ENCODE measurements at regions of chr20 and their contacts with region 1.

Region 1: DNA sequence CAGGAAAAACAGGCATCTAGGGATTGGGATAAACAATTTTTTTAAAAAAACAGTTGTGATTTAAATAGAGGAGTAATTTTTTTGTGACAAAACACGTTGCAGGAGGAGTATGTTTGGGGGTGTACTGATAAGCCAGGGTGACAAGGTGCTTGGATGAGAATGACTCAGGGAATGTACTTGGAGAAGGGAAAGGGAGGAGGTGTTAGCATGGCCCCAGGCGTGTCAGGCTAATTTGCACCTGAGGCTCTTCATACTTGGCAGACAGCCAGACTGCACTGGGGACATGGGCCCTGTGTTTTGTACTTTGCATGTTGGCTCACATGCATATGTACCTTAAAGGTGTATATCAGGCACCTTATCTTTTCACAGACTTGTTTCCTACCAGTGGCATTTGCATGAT is 22.8 kb downstream of the PANK2 start:
- DNase-seq: no peak
- H3K4me3 ChIP-seq: no peak overlapping the region
- H3K4me3 Mint-ChIP-seq: no peak overlapping the region
- H3K27ac ChIP-seq: no peak overlapping the region
- H3K27ac Mint-ChIP-seq: peak overlapping the region in 3 of 7 donors; percentile 9 to 88 (median 47)
- H3K4me1 ChIP-seq: peaks cover 35% of the 10 kb centered on the region
- H3K4me1 Mint-ChIP-seq: peaks cover 27 to 58% (median 50%) of the 10 kb centered on the region in 4 donors
- H3K27me3 ChIP-seq: no peaks in the 10 kb centered on the region
- H3K27me3 Mint-ChIP-seq: no peaks in the 10 kb centered on the region

Region 2: GRCh38 chr20:3896302-3896701 is 15.7 kb before region 1 on chr20:
- CTCF ChIA-PET with region 1: no interaction called
- POLR2A ChIA-PET with region 1: interaction called, 16 read pairs
- intact Hi-C with region 1: no loop called
- DNase-seq: no peak
- H3K4me3 ChIP-seq: no peak overlapping the region
- H3K4me3 Mint-ChIP-seq: peak overlapping the region in 6 of 8 donors; percentile 22 to 86 (median 54)
- H3K27ac ChIP-seq: no peak overlapping the region
- H3K27ac Mint-ChIP-seq: peak overlapping the region in 6 of 7 donors; percentile 21 to 86 (median 70)
- H3K4me1 ChIP-seq: peaks cover 95% of the 10 kb centered on the region
- H3K4me1 Mint-ChIP-seq: peaks cover 53 to 93% (median 73%) of the 10 kb centered on the region in 4 donors
- H3K27me3 ChIP-seq: no peaks in the 10 kb centered on the region
- H3K27me3 Mint-ChIP-seq: no peaks in the 10 kb centered on the region

Region 3: DNA sequence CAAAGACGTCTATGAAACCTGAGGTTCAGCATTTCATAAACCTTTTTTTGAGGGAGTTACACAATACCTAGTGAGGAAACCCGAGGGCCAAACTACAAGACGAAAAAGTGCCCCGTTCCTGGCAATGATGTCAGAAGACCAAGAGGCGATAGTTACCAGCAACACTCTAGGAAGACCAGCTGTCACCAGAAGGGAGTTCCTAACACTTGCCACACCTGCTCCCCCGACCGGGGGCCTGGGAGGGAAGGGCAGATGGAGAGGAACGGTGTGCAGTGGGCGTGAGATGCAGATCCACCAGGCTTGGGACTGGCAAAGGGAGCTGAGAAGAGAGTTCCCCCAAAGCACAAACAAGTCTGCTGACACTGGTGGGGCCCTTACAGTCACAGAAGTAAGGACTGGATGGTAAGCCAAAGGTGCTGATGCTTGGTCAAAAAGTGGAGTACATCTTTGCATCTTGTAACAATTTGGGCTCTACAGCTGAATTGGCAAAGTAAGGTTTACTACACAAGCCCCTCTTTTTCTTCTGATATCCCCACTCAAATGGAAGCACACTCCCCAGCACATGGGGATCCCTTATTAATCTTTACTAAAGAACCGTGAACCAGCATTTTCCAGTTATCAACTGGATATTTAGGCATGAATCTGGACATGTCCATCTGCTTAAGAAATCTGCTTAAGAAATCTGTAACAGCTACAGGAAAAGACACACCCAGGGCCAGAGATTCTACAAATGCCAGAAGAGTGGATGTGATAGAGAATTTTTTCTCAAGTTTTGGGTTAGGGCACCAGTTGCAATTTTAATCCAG is 15.7 kb after region 1 on chr20:
- CTCF ChIA-PET with region 1: no interaction called
- POLR2A ChIA-PET with region 1: no interaction called
- intact Hi-C with region 1: no loop called
- DNase-seq: no peak
- H3K4me3 ChIP-seq: no peak overlapping the region
- H3K4me3 Mint-ChIP-seq: peak overlapping the region in 1 of 8 donors; percentile 3
- H3K27ac ChIP-seq: no peak overlapping the region
- H3K27ac Mint-ChIP-seq: peak overlapping the region; percentile 10 to 79 (median 51)
- H3K4me1 ChIP-seq: peaks cover 31% of the 10 kb centered on the region
- H3K4me1 Mint-ChIP-seq: peaks cover 23 to 68% (median 47%) of the 10 kb centered on the region in 4 donors
- H3K27me3 ChIP-seq: no peaks in the 10 kb centered on the region
- H3K27me3 Mint-ChIP-seq: no peaks in the 10 kb centered on the region

Region 4: DNA sequence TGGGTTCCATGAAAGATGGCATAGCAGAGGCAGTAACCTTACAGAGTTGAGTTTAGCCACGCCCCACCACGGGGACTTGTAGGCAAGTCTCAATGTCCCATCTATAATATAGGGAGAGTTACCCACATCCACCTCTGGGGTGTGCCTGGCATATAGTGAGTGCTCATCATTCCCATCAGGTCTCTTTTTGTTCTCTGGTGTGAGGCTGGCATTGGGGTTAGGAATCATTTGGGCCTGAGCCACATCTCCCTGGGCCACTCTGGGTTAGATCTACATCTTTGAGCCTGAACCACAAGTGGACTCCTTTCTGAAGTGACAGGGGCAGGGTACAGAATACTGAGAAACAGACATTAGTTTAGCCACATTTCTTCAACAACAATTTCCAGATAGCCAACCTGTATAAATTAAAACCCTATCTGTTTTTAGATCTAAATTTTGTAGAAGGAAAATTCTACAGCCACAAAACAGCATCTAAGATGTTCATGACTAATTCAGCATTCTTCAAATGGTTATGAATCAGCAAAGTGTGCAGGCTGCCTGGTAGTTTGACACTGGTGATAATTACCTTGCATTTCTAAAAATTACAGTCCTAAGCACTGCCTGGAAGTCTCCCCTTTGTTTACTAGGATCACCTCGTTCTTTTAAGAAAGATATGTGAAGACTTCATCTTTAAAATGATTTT is 83.3 kb after region 1 on chr20:
- CTCF ChIA-PET with region 1: no interaction called
- POLR2A ChIA-PET with region 1: interaction called, 3 read pairs
- intact Hi-C with region 1: loop called (anchors 5 kb)
- DNase-seq: peak in 1 of 5 donors; percentile 29
- H3K4me3 ChIP-seq: no peak overlapping the region
- H3K4me3 Mint-ChIP-seq: peak overlapping the region in 5 of 8 donors; percentile 39 to 63 (median 52)
- H3K27ac ChIP-seq: no peak overlapping the region
- H3K27ac Mint-ChIP-seq: peak overlapping the region in 6 of 7 donors; percentile 33 to 81 (median 68)
- H3K4me1 ChIP-seq: peaks cover 43% of the 10 kb centered on the region
- H3K4me1 Mint-ChIP-seq: peaks cover 29 to 69% (median 45%) of the 10 kb centered on the region in 4 donors
- H3K27me3 ChIP-seq: no peaks in the 10 kb centered on the region
- H3K27me3 Mint-ChIP-seq: no peaks in the 10 kb centered on the region

Region 5: DNA sequence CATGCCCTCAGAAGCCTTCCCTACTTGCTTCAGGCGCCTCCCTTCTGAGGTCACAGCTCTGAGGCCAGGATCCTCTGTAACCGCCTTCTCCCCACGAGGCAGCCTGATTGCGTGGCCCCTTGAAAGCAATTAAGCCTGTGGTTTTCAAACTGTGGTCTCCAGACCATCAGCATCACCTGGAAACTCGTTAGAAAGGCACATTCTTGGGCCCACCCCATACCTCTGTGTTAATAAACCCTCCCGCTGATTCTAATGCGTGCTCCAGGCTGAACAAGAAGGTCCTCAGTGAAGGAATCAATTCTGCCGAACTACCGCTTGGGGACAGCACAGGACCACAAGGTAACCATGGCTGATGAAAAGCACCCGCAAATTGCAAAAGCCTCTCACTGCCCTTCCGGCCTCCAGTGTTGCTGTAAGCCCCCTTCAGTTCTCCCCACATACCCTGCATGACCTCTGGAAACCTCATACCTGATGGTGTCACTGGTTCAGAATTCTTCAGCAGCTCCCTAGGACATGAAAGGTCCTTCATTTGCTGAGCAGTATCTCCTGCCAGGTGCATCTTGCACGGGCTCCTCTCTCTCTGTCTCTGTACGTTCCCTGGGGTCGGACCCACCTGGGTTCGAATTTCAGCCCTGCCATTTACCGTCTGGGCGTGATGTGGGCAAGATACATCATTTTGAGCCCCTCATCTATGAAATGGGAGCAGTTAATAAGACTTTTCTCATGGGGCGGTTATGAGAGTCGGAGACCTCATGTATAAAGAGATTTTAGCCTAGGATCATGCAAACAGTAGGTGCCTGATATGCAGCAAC is 196.7 kb after region 1 on chr20:
- CTCF ChIA-PET with region 1: no interaction called
- POLR2A ChIA-PET with region 1: no interaction called
- intact Hi-C with region 1: no loop called
- DNase-seq: peak; percentile 60 to 67 (median 63)
- H3K4me3 ChIP-seq: no peak overlapping the region
- H3K4me3 Mint-ChIP-seq: no peak overlapping the region
- H3K27ac ChIP-seq: no peak overlapping the region
- H3K27ac Mint-ChIP-seq: no peak overlapping the region
- H3K4me1 ChIP-seq: no peaks in the 10 kb centered on the region
- H3K4me1 Mint-ChIP-seq: peaks cover 0 to 6% (median 1%) of the 10 kb centered on the region in 4 donors
- H3K27me3 ChIP-seq: no peaks in the 10 kb centered on the region
- H3K27me3 Mint-ChIP-seq: peaks cover 2 to 13% of the 10 kb centered on the region in 2 donors

Region 6: DNA sequence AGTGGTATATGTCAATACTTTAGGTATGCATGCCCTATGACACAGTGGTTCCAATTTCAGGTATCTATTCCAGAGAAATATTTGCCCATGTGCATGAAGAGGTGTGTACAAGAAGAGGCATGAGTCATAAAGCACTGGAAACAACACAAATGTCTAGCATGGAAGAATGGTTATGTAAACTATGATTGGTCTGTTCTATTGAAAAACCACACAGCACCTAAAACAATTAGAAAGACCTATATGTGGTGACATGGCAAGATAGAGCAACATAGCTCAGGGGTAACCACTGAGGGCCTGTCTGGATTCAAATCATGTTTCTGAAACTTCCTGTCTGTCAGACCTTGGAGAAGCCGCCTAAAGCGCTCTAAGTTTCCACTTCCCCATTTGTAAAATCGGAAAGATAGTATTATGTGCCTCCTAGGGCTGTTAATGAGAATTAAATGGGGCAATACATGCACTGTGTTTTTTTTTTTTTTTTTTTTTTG is 1762.3 kb after region 1 on chr20:
- CTCF ChIA-PET with region 1: no interaction called
- POLR2A ChIA-PET with region 1: no interaction called
- intact Hi-C with region 1: no loop called
- DNase-seq: peak in 1 of 5 donors; percentile 42
- H3K4me3 ChIP-seq: no peak overlapping the region
- H3K4me3 Mint-ChIP-seq: no peak overlapping the region
- H3K27ac ChIP-seq: no peak overlapping the region
- H3K27ac Mint-ChIP-seq: peak overlapping the region in 2 of 7 donors; percentile 17 to 18
- H3K4me1 ChIP-seq: no peaks in the 10 kb centered on the region
- H3K4me1 Mint-ChIP-seq: peaks cover 2 to 5% (median 4%) of the 10 kb centered on the region in 4 donors
- H3K27me3 ChIP-seq: no peaks in the 10 kb centered on the region
- H3K27me3 Mint-ChIP-seq: no peaks in the 10 kb centered on the region